WTC11 (cell line): ENCODE measurements at regions of chr20 and their contacts with region 1.

Region 1: GRCh38 chr20:33791959-33792597 is 19.1 kb upstream of the CHMP4B start:
- DNase-seq: peak; percentile 75
- ATAC-seq: peak; percentile 86
- H3K4me3 Mint-ChIP-seq: no peak overlapping the region
- H3K27ac Mint-ChIP-seq: no peak overlapping the region
- H3K4me1 Mint-ChIP-seq: peaks cover 14% of the 10 kb centered on the region
- H3K27me3 Mint-ChIP-seq: no peaks in the 10 kb centered on the region
- CTCF ChIP-seq: peak; percentile 94

Region 2: DNA sequence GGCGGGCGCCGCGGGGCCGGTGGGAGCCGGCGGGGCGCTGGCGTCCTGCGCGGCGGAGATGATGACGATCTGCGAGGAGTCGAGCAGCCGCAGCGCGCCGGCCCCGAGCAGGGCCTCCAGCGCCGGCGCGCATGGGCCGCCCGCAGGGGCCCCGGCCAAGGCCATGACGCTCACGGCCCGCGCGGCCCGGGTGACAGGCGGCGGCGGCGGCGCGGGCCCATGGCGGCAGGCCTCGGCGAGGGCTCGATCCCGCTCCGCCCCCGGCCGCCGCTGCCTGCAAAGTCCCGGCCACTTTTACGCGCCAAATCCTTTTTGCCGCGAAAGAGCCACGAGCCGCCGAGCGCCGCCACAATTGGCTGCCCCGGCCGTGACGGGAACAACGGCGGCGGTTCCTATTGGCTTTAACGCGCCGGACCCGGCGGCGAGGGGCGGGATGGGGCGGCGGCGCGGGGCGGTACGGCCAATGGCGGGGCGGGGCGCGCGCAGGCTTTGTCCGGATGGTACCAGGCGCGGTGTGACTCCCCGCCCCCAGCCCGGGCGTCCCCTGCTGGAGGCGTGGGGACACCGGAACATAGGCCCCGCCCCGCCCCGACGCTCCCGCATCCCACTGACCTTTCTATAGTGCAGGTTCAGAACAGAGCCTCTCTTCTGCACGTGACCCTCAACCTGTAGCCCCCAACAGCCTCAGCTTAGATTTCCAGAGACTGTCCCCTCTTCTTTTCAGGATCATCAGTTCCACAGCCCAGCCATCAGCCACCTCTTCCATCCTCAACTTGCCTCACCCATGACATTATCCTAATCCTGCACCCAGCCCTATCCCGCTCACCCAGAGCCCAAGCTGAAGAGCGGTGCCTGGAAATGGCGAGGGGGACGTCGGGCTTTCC is 105.7 kb before region 1 on chr20 and contains the start of gene E2F1:
- CTCF ChIA-PET with region 1: no interaction called
- POLR2A ChIA-PET with region 1: no interaction called
- DNase-seq: peak; percentile 98
- ATAC-seq: peak; percentile 91
- H3K4me3 Mint-ChIP-seq: peak within 1 kb of the TSS; percentile 81
- H3K27ac Mint-ChIP-seq: peak within 1 kb of the TSS; percentile 85
- H3K4me1 Mint-ChIP-seq: peaks cover 25% of the 10 kb centered on the region
- H3K27me3 Mint-ChIP-seq: peaks cover 30% of the 10 kb centered on the region
- CTCF ChIP-seq: no peak
- total RNA-seq, gene E2F1: 34.2 to 44.2 TPM (median 34.5 TPM) in 3 replicates

Region 3: GRCh38 chr20:33719989-33720709 is 71.9 kb before region 1 on chr20 and contains the start of gene PXMP4:
- CTCF ChIA-PET with region 1: interaction called, 10 read pairs
- POLR2A ChIA-PET with region 1: no interaction called
- DNase-seq: peak; percentile 85
- ATAC-seq: peak; percentile 98
- H3K4me3 Mint-ChIP-seq: peak within 1 kb of the TSS; percentile 70
- H3K27ac Mint-ChIP-seq: peak within 1 kb of the TSS; percentile 7; the same call in 1 of the 2 replicates
- H3K4me1 Mint-ChIP-seq: peaks cover 4% of the 10 kb centered on the region
- H3K27me3 Mint-ChIP-seq: peaks cover 6% of the 10 kb centered on the region; the same call in 1 of the 2 replicates
- CTCF ChIP-seq: no peak
- total RNA-seq, gene PXMP4: 3.3 to 6.0 TPM (median 5.8 TPM) in 3 replicates

Region 4: DNA sequence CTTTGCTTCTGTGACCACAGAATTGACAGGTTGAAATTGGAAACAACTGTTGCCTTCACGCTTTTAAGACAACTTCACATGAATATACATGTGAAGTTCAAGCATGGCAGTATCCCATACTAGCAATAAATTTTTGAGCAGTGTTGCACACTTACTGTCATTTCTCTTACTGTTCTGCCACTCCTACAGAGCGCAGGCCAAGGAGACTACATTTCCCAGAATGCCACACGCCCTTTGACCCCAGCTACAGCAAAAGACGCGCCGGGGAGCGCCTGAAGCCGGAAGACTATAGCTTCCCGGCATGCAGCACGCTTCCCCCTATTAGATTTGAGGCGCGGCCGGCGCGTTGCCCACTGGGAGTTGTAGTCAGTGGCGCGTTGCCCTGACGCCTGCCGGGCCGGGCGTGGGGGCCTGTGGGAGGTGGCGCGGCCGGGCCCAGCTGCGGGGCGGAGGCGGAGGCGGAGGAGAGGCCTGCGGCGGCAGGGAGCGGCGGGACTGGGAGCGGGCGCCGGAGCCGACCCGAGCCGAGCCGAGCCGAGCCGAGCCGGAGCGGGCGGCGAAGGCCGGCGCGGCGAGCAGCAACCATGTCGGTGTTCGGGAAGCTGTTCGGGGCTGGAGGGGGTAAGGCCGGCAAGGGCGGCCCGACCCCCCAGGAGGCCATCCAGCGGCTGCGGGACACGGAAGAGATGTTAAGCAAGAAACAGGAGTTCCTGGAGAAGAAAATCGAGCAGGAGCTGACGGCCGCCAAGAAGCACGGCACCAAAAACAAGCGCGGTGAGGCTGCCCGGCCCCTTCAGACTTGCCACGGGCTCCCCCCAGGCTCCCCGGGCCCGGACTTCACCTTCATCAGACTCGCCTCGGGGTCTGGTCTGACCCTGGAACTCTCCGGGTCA is 19.1 kb after region 1 on chr20 and contains the start of gene CHMP4B:
- CTCF ChIA-PET with region 1: interaction called, 22 read pairs
- POLR2A ChIA-PET with region 1: interaction called, 5 read pairs
- DNase-seq: peak; percentile 99
- ATAC-seq: peak; percentile 94
- H3K4me3 Mint-ChIP-seq: peak within 1 kb of the TSS; percentile 92
- H3K27ac Mint-ChIP-seq: peak within 1 kb of the TSS; percentile 89
- H3K4me1 Mint-ChIP-seq: peaks cover 15% of the 10 kb centered on the region
- H3K27me3 Mint-ChIP-seq: no peaks in the 10 kb centered on the region
- CTCF ChIP-seq: no peak
- total RNA-seq, gene CHMP4B: 65.4 to 72.5 TPM (median 66.1 TPM) in 3 replicates

Region 5: GRCh38 chr20:33826270-33826897 is 34.3 kb after region 1 on chr20:
- CTCF ChIA-PET with region 1: interaction called, 14 read pairs
- POLR2A ChIA-PET with region 1: no interaction called
- DNase-seq: no peak
- ATAC-seq: peak; percentile 95
- H3K4me3 Mint-ChIP-seq: no peak overlapping the region
- H3K27ac Mint-ChIP-seq: peak overlapping the region; percentile 36
- H3K4me1 Mint-ChIP-seq: peaks cover 36% of the 10 kb centered on the region
- H3K27me3 Mint-ChIP-seq: no peaks in the 10 kb centered on the region
- CTCF ChIP-seq: no peak

Region 6: GRCh38 chr20:33963751-33964150 is 171.7 kb after region 1 on chr20:
- CTCF ChIA-PET with region 1: no interaction called
- POLR2A ChIA-PET with region 1: no interaction called
- DNase-seq: no peak
- ATAC-seq: no peak
- H3K4me3 Mint-ChIP-seq: no peak overlapping the region
- H3K27ac Mint-ChIP-seq: no peak overlapping the region
- H3K4me1 Mint-ChIP-seq: peaks cover 5% of the 10 kb centered on the region
- H3K27me3 Mint-ChIP-seq: no peaks in the 10 kb centered on the region
- CTCF ChIP-seq: no peak

Region 7: GRCh38 chr20:33984182-33984719 is 192.2 kb after region 1 on chr20:
- CTCF ChIA-PET with region 1: no interaction called
- POLR2A ChIA-PET with region 1: no interaction called
- DNase-seq: no peak
- ATAC-seq: no peak
- H3K4me3 Mint-ChIP-seq: no peak overlapping the region
- H3K27ac Mint-ChIP-seq: no peak overlapping the region
- H3K4me1 Mint-ChIP-seq: no peaks in the 10 kb centered on the region
- H3K27me3 Mint-ChIP-seq: no peaks in the 10 kb centered on the region
- CTCF ChIP-seq: no peak